ENCODE measurements at regions of chr2 and their contacts with region 1.

Region 1: GRCh38 chr2:109510136-109511028 is 103.4 kb downstream of the SEPTIN10 start:
- DNase-seq: peak; percentile 34 to 84 (median 67)
- ATAC-seq: peak; percentile 72 to 84 (median 77)
- H3K4me3 ChIP-seq: no peak overlapping the region
- H3K4me3 Mint-ChIP-seq: no peak overlapping the region
- H3K27ac ChIP-seq: no peak overlapping the region
- H3K27ac Mint-ChIP-seq: peak overlapping the region in 1 of 2 donors; percentile 28
- H3K4me1 ChIP-seq: peaks cover 0 to 14% of the 10 kb centered on the region in 2 experiments
- H3K4me1 Mint-ChIP-seq: peaks cover 5 to 10% (median 6%) of the 10 kb centered on the region in 3 donors
- H3K27me3 ChIP-seq: peaks cover 0 to 11% of the 10 kb centered on the region in 2 experiments
- H3K27me3 Mint-ChIP-seq: peaks cover 0 to 3% of the 10 kb centered on the region in 2 donors

Region 2: DNA sequence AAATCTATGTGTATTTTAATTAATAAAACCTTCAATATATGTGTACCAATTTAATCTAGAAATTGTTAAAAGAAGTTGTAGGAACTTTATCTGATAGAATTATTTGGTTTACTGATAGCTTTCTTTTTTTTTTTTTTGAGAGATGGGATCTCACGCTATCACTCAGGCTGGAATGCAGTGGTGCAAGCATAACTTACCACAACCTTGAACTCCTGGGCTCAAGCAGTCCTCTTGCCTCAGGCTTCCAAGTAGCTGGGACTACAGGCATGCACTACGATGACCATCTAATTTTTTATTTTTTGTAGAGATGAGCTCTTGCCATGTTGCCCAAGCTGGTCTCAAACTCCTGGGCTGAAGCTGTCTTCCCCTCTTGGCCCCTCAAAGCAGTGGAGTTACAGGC is 657.0 kb before region 1 on chr2:
- CTCF ChIA-PET with region 1: interaction called, 3 to 11 read pairs
- POLR2A ChIA-PET with region 1: no interaction called
- DNase-seq: no peak
- ATAC-seq: no peak
- H3K4me3 ChIP-seq: no peak overlapping the region
- H3K4me3 Mint-ChIP-seq: no peak overlapping the region
- H3K27ac ChIP-seq: no peak overlapping the region
- H3K27ac Mint-ChIP-seq: no peak overlapping the region
- H3K4me1 ChIP-seq: no peaks in the 10 kb centered on the region
- H3K4me1 Mint-ChIP-seq: peaks cover 3 to 5% (median 3%) of the 10 kb centered on the region in 3 donors
- H3K27me3 ChIP-seq: no peaks in the 10 kb centered on the region
- H3K27me3 Mint-ChIP-seq: no peaks in the 10 kb centered on the region

Measured in T-cell (primary cell).